ENCODE measurements at regions of chr7 and their contacts with region 1.

Region 1: DNA sequence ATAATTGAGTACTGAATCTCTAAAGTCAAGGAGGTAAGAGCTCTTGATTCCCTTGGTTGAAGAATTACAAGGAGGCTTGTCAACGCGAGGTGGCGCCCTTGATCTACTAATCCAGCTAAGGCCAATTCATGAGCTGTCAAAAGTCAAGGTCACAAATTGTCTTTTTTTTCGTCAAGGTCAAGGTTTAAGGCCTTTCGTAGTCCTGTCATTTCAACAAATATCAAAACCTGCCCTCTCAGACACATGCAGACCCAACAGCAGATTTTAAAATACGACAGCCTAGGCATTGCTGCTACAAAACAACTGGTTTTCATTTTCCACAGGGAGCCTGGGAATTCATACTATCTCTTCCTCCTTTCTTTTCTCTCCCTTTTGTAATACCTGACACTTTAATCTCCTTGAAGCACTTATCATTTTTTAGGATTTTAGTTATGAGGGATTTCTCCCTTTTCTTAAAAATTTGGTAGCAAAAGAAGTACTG is 3.6 kb downstream of the HOXA13 start:
- DNase-seq: peak; percentile 75 to 89 (median 83)
- ATAC-seq: peak; percentile 51
- H3K4me3 ChIP-seq: no peak overlapping the region
- H3K4me3 Mint-ChIP-seq: peak overlapping the region; percentile 57
- H3K27ac ChIP-seq: no peak overlapping the region
- H3K27ac Mint-ChIP-seq: no peak overlapping the region
- H3K4me1 ChIP-seq: peaks cover 53% of the 10 kb centered on the region
- H3K4me1 Mint-ChIP-seq: peaks cover 43% of the 10 kb centered on the region
- H3K27me3 ChIP-seq: peaks cover 80 to 88% of the 10 kb centered on the region in 2 experiments
- H3K27me3 Mint-ChIP-seq: peaks cover 88% of the 10 kb centered on the region
- CTCF ChIP-seq: peak; percentile 84

Region 2: GRCh38 chr7:27150568-27151340 is 45.6 kb before region 1 on chr7:
- CTCF ChIA-PET with region 1: interaction called, 7 read pairs
- POLR2A ChIA-PET with region 1: interaction called, 4 read pairs
- intact Hi-C with region 1: loop called in 1 of 2 experiments (anchors 5 kb)
- DNase-seq: peak in 13 of 14 experiments; percentile 31 to 86 (median 59)
- ATAC-seq: peak; percentile 85
- H3K4me3 ChIP-seq: peak overlapping the region; percentile 46
- H3K4me3 Mint-ChIP-seq: peak overlapping the region; percentile 79
- H3K27ac ChIP-seq: no peak overlapping the region
- H3K27ac Mint-ChIP-seq: no peak overlapping the region
- H3K4me1 ChIP-seq: peaks cover 61% of the 10 kb centered on the region
- H3K4me1 Mint-ChIP-seq: peaks cover 50% of the 10 kb centered on the region
- H3K27me3 ChIP-seq: peaks cover 91 to 98% of the 10 kb centered on the region in 2 experiments
- H3K27me3 Mint-ChIP-seq: peaks cover 98% of the 10 kb centered on the region
- CTCF ChIP-seq: peak; percentile 85

Region 3: DNA sequence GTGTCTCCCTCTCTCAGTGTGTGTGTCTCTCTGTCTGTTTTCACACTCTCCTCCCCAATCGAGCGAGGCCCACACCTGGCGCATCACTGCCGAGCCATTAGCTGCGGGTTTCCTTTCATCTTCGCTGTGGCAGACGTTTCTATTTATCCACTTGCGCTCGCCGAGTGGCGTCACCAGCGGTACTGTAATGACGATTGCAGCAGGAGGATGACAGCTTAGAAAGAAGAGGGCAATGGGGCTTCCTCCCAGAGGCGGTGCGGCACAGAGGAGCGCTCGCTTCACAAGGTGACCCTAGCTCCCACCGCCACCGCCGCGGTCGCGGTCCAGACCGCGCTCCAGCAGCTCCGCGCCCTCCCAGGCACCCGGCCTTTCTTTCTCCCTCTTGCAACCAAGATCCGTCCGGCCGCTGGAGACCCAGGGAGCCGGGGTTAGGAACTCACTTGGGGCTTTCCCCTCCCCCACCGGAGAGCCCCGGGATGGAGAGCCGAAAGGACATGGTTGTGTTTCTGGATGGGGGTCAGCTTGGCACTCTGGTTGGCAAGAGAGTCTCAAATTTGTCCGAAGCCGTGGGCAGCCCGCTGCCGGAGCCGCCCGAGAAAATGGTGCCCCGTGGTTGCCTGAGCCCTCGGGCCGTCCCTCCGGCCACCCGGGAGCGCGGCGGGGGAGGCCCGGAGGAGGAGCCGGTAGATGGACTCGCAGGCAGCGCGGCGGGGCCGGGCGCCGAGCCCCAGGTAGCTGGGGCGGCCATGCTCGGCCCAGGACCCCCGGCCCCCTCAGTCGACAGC is 46.4 kb after region 1 on chr7 and contains the start of gene EVX1:
- CTCF ChIA-PET with region 1: no interaction called
- POLR2A ChIA-PET with region 1: no interaction called
- intact Hi-C with region 1: no loop called
- DNase-seq: peak in 7 of 14 experiments; percentile 4 to 72 (median 56)
- ATAC-seq: peak; percentile 78
- H3K4me3 ChIP-seq: no peak within 1 kb of the TSS
- H3K4me3 Mint-ChIP-seq: peak within 1 kb of the TSS; percentile 69
- H3K27ac ChIP-seq: no peak within 1 kb of the TSS
- H3K27ac Mint-ChIP-seq: peak within 1 kb of the TSS; percentile 62
- H3K4me1 ChIP-seq: peaks cover 36% of the 10 kb centered on the region
- H3K4me1 Mint-ChIP-seq: peaks cover 33% of the 10 kb centered on the region
- H3K27me3 ChIP-seq: peaks cover 80 to 97% of the 10 kb centered on the region in 2 experiments
- H3K27me3 Mint-ChIP-seq: peaks cover 81% of the 10 kb centered on the region
- CTCF ChIP-seq: no peak
- total RNA-seq, gene EVX1: 0.25 to 0.33 TPM

Region 4: DNA sequence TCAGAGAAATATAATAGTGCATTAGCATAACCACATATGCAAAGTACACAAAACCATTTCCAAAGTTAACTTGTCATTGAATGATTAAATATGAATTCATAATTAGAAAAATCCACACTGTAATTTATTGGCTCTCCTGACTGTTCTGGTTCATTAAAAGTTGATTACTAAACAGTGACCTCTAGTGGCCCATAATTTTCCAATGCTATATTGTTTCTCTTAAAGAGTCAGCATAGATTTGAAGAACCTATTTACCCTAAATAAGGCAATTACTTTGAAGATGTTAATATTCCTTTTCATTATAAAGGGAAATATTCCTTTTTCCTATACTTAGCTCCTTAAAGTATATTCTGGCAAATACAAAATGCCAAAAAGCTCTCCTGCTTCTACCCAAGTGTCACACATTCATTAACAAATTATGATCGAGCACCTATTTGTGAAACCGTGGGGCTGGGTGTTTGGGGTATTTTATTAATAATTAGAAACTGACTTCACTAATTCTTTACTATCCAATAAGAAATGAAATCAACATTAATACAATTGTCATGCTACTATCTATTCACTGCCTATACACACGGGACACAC is 380.1 kb after region 1 on chr7:
- CTCF ChIA-PET with region 1: interaction called, 4 read pairs
- POLR2A ChIA-PET with region 1: no interaction called
- intact Hi-C with region 1: loop called (anchors 1 to 2 kb)
- DNase-seq: peak in 3 of 14 experiments; percentile 34 to 53 (median 43)
- ATAC-seq: no peak
- H3K4me3 ChIP-seq: no peak overlapping the region
- H3K4me3 Mint-ChIP-seq: no peak overlapping the region
- H3K27ac ChIP-seq: no peak overlapping the region
- H3K27ac Mint-ChIP-seq: no peak overlapping the region
- H3K4me1 ChIP-seq: no peaks in the 10 kb centered on the region
- H3K4me1 Mint-ChIP-seq: no peaks in the 10 kb centered on the region
- H3K27me3 ChIP-seq: no peaks in the 10 kb centered on the region
- H3K27me3 Mint-ChIP-seq: no peaks in the 10 kb centered on the region
- CTCF ChIP-seq: peak; percentile 69

Region 5: DNA sequence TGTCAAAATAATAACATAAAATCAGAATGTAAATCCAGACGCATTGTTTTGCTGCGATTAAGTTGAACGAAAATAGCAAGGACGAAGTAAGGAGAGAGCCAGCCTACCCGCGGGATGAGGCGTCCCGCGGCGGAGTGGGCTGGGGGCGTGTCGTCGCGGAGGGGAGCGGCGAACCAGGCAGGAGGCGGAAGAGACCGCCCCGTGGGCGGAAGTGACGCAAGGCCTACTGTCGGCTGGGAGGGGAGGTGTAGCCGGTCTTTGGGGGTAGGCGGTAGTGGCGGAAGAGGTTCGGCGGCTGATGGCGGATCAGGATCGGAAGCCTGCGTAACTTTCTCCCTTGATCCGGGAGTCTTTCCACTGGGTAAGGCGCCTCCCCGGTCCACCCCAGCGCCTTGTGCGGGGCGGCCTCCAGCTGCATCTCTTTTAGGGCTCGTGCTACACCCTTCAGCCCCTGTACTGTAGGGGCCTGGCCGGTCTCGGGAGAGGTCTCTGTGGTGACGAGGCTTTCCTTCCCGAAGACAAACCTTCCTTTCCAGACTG is 543.7 kb after region 1 on chr7 and contains the start of gene TAX1BP1:
- CTCF ChIA-PET with region 1: no interaction called
- POLR2A ChIA-PET with region 1: interaction called, 3 read pairs
- intact Hi-C with region 1: loop called in 1 of 2 experiments (anchors 10 kb)
- DNase-seq: peak; percentile 89 to 98 (median 94)
- ATAC-seq: peak; percentile 91
- H3K4me3 ChIP-seq: peak within 1 kb of the TSS; percentile 88
- H3K4me3 Mint-ChIP-seq: peak within 1 kb of the TSS; percentile 99
- H3K27ac ChIP-seq: peak within 1 kb of the TSS; percentile 98 to 99
- H3K27ac Mint-ChIP-seq: peak within 1 kb of the TSS; percentile 98
- H3K4me1 ChIP-seq: peaks cover 13% of the 10 kb centered on the region
- H3K4me1 Mint-ChIP-seq: peaks cover 53% of the 10 kb centered on the region
- H3K27me3 ChIP-seq: no peaks in the 10 kb centered on the region
- H3K27me3 Mint-ChIP-seq: no peaks in the 10 kb centered on the region
- CTCF ChIP-seq: no peak
- total RNA-seq, gene TAX1BP1: 115 TPM

Region 6: DNA sequence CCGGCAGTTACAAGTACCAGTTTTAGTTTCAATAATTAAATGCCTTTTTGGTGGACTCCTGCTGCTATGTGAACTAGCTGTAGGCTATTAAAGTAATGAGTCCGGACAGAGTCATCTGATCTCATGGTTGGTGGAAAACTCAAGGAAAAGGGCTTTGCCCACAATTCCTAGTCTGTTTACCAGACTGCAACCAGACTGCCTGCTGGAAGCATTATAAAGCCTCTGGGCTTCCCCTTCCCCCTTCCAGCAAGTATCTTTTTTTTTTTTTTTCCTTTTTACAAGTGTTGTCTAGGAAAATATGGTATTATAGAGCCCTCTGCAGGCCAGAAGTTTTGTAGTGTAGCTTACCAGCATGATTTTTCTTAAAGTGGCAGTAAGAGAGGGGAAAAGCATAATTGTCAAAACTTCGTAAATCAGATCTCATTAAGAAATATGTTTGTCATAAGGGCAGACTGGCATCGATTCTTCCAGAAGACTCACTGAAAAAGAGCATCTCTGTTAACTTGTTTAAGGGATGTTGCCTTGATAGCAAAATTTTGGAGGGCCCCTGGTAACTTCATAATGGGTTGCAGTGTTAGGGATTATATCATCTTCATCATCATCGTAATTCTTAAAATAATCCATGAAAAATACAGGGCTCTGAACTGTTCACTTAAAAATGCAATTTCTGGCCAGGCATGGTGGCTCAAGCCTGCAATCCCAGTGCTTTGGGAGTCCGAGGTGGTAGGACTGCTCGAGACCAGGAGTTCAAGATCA is 724.9 kb after region 1 on chr7:
- CTCF ChIA-PET with region 1: interaction called, 4 read pairs
- POLR2A ChIA-PET with region 1: no interaction called
- intact Hi-C with region 1: loop called (anchors 1 to 5 kb)
- DNase-seq: peak in 3 of 14 experiments; percentile 47 to 64 (median 58)
- ATAC-seq: peak; percentile 48
- H3K4me3 ChIP-seq: no peak overlapping the region
- H3K4me3 Mint-ChIP-seq: no peak overlapping the region
- H3K27ac ChIP-seq: no peak overlapping the region
- H3K27ac Mint-ChIP-seq: no peak overlapping the region
- H3K4me1 ChIP-seq: no peaks in the 10 kb centered on the region
- H3K4me1 Mint-ChIP-seq: no peaks in the 10 kb centered on the region
- H3K27me3 ChIP-seq: no peaks in the 10 kb centered on the region
- H3K27me3 Mint-ChIP-seq: no peaks in the 10 kb centered on the region
- CTCF ChIP-seq: peak; percentile 44

Region 7: DNA sequence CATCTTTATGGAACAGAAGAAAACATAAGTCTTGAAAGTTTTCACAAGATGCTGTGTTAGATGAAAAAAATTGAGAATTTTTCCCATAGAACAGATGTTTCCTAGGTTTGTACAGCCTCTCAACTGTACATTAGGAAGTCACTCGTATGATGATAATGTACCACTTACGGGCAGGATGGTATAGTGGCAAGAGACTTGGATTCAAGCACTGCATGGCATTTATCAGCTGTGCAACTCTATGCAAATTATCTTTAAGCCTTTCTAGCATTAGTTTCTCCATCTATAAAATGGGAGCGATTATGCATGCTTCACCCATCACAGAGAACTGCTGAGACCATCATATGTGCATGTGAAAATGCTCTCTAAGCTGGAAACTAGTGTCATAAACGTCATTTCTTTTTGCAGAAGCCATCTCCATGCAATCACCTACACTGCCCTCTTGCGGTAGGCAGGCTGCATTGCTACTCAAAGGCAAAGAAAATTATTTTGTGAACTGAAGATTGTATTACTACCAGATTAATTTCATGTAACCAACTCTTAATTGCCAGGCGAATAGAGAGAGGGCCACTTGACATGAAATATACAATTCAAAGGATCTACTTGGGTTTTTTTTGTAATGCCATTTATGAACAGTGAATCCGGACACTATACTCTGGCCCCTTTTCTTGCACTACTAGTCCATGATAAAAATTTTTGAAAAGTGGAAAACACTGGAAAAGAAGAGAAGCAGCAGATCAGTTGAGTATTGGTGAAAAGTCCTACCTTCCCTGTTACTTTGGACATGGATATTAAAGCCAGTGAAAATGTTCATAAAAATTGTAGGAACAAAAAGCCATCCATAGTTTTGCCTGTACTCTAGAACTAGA is 881.9 kb after region 1 on chr7:
- CTCF ChIA-PET with region 1: interaction called, 8 read pairs
- POLR2A ChIA-PET with region 1: no interaction called
- intact Hi-C with region 1: loop called (anchors 1 to 5 kb)
- DNase-seq: peak; percentile 16 to 72 (median 38)
- ATAC-seq: peak; percentile 64
- H3K4me3 ChIP-seq: no peak overlapping the region
- H3K4me3 Mint-ChIP-seq: no peak overlapping the region
- H3K27ac ChIP-seq: no peak overlapping the region
- H3K27ac Mint-ChIP-seq: no peak overlapping the region
- H3K4me1 ChIP-seq: no peaks in the 10 kb centered on the region
- H3K4me1 Mint-ChIP-seq: peaks cover 8% of the 10 kb centered on the region
- H3K27me3 ChIP-seq: no peaks in the 10 kb centered on the region
- H3K27me3 Mint-ChIP-seq: no peaks in the 10 kb centered on the region
- CTCF ChIP-seq: peak; percentile 99

Region 8: GRCh38 chr7:28179120-28180030 is 983.0 kb after region 1 on chr7:
- CTCF ChIA-PET with region 1: no interaction called
- POLR2A ChIA-PET with region 1: no interaction called
- intact Hi-C with region 1: loop called in 1 of 2 experiments (anchors 10 kb)
- DNase-seq: peak; percentile 52 to 89 (median 74)
- ATAC-seq: peak; percentile 65
- H3K4me3 ChIP-seq: peak overlapping the region; percentile 52
- H3K4me3 Mint-ChIP-seq: peak overlapping the region; percentile 83
- H3K27ac ChIP-seq: no peak overlapping the region
- H3K27ac Mint-ChIP-seq: peak overlapping the region; percentile 81
- H3K4me1 ChIP-seq: peaks cover 15% of the 10 kb centered on the region
- H3K4me1 Mint-ChIP-seq: peaks cover 22% of the 10 kb centered on the region
- H3K27me3 ChIP-seq: no peaks in the 10 kb centered on the region
- H3K27me3 Mint-ChIP-seq: no peaks in the 10 kb centered on the region
- CTCF ChIP-seq: no peak